ENCODE measurements at regions of chr2 and their contacts with region 1.

Region 1: GRCh38 chr2:24084386-24085361 is at the start of gene TP53I3:
- DNase-seq: peak; percentile 90
- CTCF ChIP-seq: peak; percentile 96

Region 2: GRCh38 chr2:23835988-23836387 is 248.7 kb before region 1 on chr2:
- CTCF ChIA-PET with region 1: interaction called, 10 read pairs
- POLR2A ChIA-PET with region 1: no interaction called
- DNase-seq: no peak
- CTCF ChIP-seq: no peak

Region 3: GRCh38 chr2:24049485-24050021 is 35.1 kb before region 1 on chr2 and contains the start of gene FKBP1B:
- CTCF ChIA-PET with region 1: interaction called, 24 read pairs
- POLR2A ChIA-PET with region 1: no interaction called
- DNase-seq: peak; percentile 76
- CTCF ChIP-seq: no peak

Region 4: GRCh38 chr2:24065341-24065740 is 19.3 kb before region 1 on chr2:
- CTCF ChIA-PET with region 1: interaction called, 91 read pairs
- POLR2A ChIA-PET with region 1: no interaction called
- DNase-seq: no peak
- CTCF ChIP-seq: no peak

Region 5: DNA sequence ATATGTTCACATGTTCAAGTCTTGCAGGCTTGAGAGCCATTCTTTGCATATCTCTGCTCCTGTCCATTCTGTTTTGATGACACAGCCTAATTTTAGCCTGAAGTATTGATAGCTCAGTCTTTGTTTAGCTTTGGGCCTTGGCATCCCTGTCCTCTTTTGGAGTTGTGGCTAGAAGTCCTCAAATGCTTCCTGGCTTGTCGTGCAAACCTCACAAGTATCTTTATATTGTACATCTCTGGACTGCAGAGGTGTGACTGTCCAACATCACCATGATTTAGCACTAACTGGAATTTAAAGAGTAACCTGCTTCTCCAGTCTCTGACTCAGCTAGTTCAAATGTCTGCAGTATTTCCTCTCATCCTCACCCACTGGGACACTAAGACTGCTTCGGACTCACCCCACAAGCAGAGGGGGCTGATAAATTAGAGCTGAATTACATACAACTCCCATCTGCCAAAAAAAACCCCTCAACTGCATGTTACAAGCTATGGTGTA is 26.8 kb after region 1 on chr2:
- CTCF ChIA-PET with region 1: interaction called, 12 read pairs
- POLR2A ChIA-PET with region 1: no interaction called
- DNase-seq: no peak
- CTCF ChIP-seq: no peak

Region 6: GRCh38 chr2:24123195-24123921 is 38.7 kb after region 1 on chr2 and contains the starts of genes FAM228B and PFN4:
- CTCF ChIA-PET with region 1: interaction called, 16 read pairs
- POLR2A ChIA-PET with region 1: interaction called, 4 read pairs
- DNase-seq: peak; percentile 95
- CTCF ChIP-seq: no peak

Region 7: GRCh38 chr2:24285484-24286152 is 200.9 kb after region 1 on chr2:
- CTCF ChIA-PET with region 1: no interaction called
- POLR2A ChIA-PET with region 1: no interaction called
- DNase-seq: no peak
- CTCF ChIP-seq: no peak

Measured in GM10248 (cell line).